ENCODE measurements at regions of chr12 and their contacts with region 1.

Region 1: GRCh38 chr12:26126340-26127284 is 1.8 kb upstream of the BHLHE41 start:
- DNase-seq: peak; percentile 60 to 93
- H3K4me3 ChIP-seq: peak overlapping the region; percentile 77 to 82
- H3K27ac ChIP-seq: peak overlapping the region; percentile 96 to 97
- H3K4me1 ChIP-seq: peaks cover 0 to 12% of the 10 kb centered on the region in 2 donors
- H3K27me3 ChIP-seq: no peaks in the 10 kb centered on the region
- CTCF ChIP-seq: peak in 1 of 3 experiments; percentile 11

Region 2: GRCh38 chr12:25585021-25585523 is 541.5 kb before region 1 on chr12:
- intact Hi-C with region 1: no loop called
- DNase-seq: peak in 1 of 2 donors; percentile 69
- H3K4me3 ChIP-seq: no peak overlapping the region
- H3K27ac ChIP-seq: no peak overlapping the region
- H3K4me1 ChIP-seq: no peaks in the 10 kb centered on the region
- H3K27me3 ChIP-seq: no peaks in the 10 kb centered on the region
- CTCF ChIP-seq: no peak

Region 3: DNA sequence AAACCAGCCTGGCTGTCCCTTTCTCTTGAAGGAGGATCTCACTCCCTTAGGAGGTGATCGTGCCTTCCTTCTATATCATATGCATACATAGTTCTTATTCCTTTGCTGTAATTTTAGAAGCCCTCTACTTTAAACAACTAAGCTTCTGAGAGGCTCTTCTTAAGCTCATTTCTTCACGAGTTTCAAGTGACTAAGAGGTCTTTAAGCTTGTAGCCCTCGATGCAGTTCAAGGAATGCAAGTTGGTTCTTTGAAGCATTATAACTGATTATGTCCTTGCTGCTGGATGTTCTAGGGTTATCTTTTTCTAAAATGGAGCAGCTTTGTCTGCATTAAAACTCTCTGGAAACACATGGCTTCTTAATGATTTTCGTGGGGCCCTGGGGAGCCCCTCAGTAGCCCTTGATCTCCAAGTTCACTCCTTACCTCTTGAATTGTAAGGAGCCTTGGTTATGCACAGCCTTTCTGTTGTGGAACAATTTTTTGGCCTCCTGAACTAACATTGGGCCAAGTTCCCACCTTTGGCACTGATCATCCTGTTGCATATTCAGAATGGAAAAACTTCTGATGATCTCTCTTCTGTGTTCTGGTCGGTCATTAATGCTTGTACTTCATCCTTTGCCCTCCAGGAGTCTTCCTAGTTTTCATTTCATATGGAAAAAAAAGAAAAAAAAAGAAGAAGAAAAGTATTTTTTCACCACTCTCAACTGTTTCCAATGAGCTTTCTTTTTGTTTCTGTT is 155.5 kb before region 1 on chr12:
- intact Hi-C with region 1: no loop called
- DNase-seq: no peak
- H3K4me3 ChIP-seq: peak overlapping the region; percentile 32 to 42
- H3K27ac ChIP-seq: peak overlapping the region; percentile 42 to 72
- H3K4me1 ChIP-seq: peaks cover 0 to 36% of the 10 kb centered on the region in 2 donors
- H3K27me3 ChIP-seq: no peaks in the 10 kb centered on the region
- CTCF ChIP-seq: peak; percentile 5 to 40 (median 13)

Region 4: DNA sequence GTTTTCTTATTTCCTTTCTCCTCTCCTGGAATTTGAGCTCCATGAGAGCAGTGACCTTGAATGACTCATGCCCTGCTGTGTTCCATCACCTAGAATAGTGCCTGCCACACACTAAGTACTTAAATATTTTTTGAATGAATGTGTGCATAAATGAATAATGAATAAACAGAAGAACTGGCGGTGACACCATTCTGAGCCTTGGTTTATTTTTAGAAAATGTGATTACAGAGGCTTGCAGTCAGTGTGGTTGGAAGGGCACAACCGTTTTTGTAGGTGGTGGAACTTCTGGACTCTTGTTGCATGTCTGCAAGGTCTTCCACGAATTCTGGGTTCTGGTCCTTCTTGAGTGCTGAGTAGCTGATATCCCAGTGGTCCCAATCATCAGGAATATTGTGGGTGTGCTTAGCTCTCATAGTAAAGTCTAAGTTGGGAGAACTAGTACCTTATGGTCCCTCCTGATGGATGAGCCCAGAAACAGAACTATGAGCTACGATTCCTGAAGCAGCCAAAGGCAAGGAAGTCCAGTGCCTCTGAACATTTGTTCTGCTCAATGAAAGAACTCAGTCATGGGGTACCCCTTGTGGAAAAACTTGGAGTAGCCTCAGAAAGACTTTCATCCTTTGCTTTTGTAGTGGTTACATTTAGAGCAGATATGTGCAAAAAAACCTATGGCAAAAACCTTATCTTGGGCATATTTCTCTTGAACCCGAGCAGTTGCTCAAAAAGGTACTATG is 27.0 kb after region 1 on chr12:
- intact Hi-C with region 1: loop called (anchors 1 kb)
- DNase-seq: peak in 1 of 2 donors; percentile 74
- H3K4me3 ChIP-seq: no peak overlapping the region
- H3K27ac ChIP-seq: peak overlapping the region; percentile 75 to 78
- H3K4me1 ChIP-seq: peaks cover 3 to 36% of the 10 kb centered on the region in 2 donors
- H3K27me3 ChIP-seq: no peaks in the 10 kb centered on the region
- CTCF ChIP-seq: peak; percentile 6 to 38 (median 28)

Region 5: GRCh38 chr12:26177283-26177682 is 50.7 kb after region 1 on chr12:
- intact Hi-C with region 1: no loop called
- DNase-seq: no peak
- H3K4me3 ChIP-seq: no peak overlapping the region
- H3K27ac ChIP-seq: no peak overlapping the region
- H3K4me1 ChIP-seq: no peaks in the 10 kb centered on the region
- H3K27me3 ChIP-seq: no peaks in the 10 kb centered on the region
- CTCF ChIP-seq: no peak

Region 6: GRCh38 chr12:26274441-26275312 is 148.1 kb after region 1 on chr12:
- intact Hi-C with region 1: loop called (anchors 2 kb)
- DNase-seq: peak; percentile 78 to 96
- H3K4me3 ChIP-seq: no peak overlapping the region
- H3K27ac ChIP-seq: peak overlapping the region; percentile 80 to 84
- H3K4me1 ChIP-seq: peaks cover 6 to 30% of the 10 kb centered on the region in 2 donors
- H3K27me3 ChIP-seq: no peaks in the 10 kb centered on the region
- CTCF ChIP-seq: no peak

Region 7: GRCh38 chr12:26523708-26524150 is 397.1 kb after region 1 on chr12:
- intact Hi-C with region 1: loop called (anchors 5 kb)
- DNase-seq: peak; percentile 57 to 93
- H3K4me3 ChIP-seq: no peak overlapping the region
- H3K27ac ChIP-seq: peak overlapping the region in 1 of 2 donors; percentile 5
- H3K4me1 ChIP-seq: peaks cover 3 to 4% of the 10 kb centered on the region in 2 donors
- H3K27me3 ChIP-seq: no peaks in the 10 kb centered on the region
- CTCF ChIP-seq: no peak